ENCODE measurements at regions of chr11 and their contacts with region 1.

Region 1: DNA sequence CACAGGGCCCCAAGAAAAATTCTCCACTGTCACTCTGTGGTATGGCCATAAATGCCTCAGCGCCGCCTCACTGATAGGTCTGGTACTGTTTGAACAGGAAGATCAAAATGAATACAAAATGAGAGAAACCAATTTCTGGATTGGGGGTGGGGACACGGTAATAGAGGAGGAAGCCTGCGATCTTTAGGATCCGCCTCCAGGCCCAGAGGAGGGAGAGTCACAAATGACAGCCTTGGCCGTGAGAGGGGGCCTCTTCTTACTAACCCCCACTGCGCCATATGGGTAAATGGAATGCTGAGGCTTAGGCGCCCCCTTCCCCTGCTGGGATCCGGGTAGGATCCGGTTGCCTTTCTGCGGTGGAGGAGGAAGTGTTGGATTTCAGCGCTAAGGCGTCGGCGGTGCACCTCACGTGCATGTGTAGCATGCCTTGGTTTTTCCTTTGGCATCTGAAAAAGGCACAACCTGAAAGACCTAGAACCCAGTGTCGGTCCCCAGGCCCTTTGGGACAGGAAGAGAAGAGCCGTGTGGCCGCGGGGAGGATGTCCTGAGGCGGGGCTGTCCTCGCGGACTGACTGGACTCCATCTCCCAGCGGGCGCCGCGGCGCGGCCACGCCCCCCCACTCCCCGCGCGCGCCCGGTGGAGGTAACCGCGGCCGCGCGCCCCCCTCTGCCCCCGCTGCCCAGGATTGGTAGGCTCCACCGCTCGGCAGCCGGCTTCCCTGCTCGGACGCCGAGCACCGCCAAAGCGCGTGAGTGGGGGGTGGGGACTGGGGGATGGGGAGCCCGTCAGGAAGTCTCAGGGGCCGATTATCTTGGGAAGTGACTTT is 718 bp upstream of the MADD start:
- DNase-seq: peak; percentile 91 to 94 (median 93)
- H3K4me3 ChIP-seq: peak overlapping the region; percentile 88
- H3K27ac ChIP-seq: peak overlapping the region; percentile 80 to 98
- H3K4me1 ChIP-seq: peaks cover 1% of the 10 kb centered on the region
- H3K27me3 ChIP-seq: no peaks in the 10 kb centered on the region
- CTCF ChIP-seq: peak in 2 of 3 donors; percentile 15 to 34
- EP300 ChIP-seq: no peak
- POLR2A ChIP-seq: peak; percentile 34

Region 2: GRCh38 chr11:47176328-47177228 is 92.6 kb before region 1 on chr11 and contains the start of gene ARFGAP2:
- intact Hi-C with region 1: loop called in 1 of 4 experiments (anchors 5 kb)
- DNase-seq: peak; percentile 96 to 98 (median 96)
- H3K4me3 ChIP-seq: peak within 1 kb of the TSS; percentile 95
- H3K27ac ChIP-seq: peak within 1 kb of the TSS; percentile 97 to 98
- H3K4me1 ChIP-seq: peaks cover 13% of the 10 kb centered on the region
- H3K27me3 ChIP-seq: no peaks in the 10 kb centered on the region
- CTCF ChIP-seq: peak in 1 of 3 donors; percentile 10
- EP300 ChIP-seq: no peak
- POLR2A ChIP-seq: peak; percentile 62
- total RNA-seq, gene ARFGAP2: 66.0 to 94.9 (median 75.2) TPM

Region 3: GRCh38 chr11:47213985-47214564 is 55.1 kb before region 1 on chr11:
- intact Hi-C with region 1: loop called in 1 of 4 experiments (anchors 5 kb)
- DNase-seq: peak; percentile 88 to 92 (median 91)
- H3K4me3 ChIP-seq: peak overlapping the region; percentile 72
- H3K27ac ChIP-seq: peak overlapping the region; percentile 88 to 93
- H3K4me1 ChIP-seq: peaks cover 10% of the 10 kb centered on the region
- H3K27me3 ChIP-seq: no peaks in the 10 kb centered on the region
- CTCF ChIP-seq: no peak
- EP300 ChIP-seq: no peak
- POLR2A ChIP-seq: peak; percentile 42

Region 4: GRCh38 chr11:47248304-47248663 is 20.9 kb before region 1 on chr11:
- intact Hi-C with region 1: no loop called
- DNase-seq: no peak
- H3K4me3 ChIP-seq: peak overlapping the region; percentile 67
- H3K27ac ChIP-seq: peak overlapping the region; percentile 40 to 65
- H3K4me1 ChIP-seq: peaks cover 13% of the 10 kb centered on the region
- H3K27me3 ChIP-seq: no peaks in the 10 kb centered on the region
- CTCF ChIP-seq: no peak
- EP300 ChIP-seq: no peak
- POLR2A ChIP-seq: no peak

Measured in ovary (tissue), 10 donors.